HEK293T (cell line): ENCODE measurements at regions of chr20 and their contacts with region 1.

Region 1: GRCh38 chr20:50987592-50988210 is 29.1 kb downstream of the MOCS3 start:
- DNase-seq: peak; percentile 79

Region 2: DNA sequence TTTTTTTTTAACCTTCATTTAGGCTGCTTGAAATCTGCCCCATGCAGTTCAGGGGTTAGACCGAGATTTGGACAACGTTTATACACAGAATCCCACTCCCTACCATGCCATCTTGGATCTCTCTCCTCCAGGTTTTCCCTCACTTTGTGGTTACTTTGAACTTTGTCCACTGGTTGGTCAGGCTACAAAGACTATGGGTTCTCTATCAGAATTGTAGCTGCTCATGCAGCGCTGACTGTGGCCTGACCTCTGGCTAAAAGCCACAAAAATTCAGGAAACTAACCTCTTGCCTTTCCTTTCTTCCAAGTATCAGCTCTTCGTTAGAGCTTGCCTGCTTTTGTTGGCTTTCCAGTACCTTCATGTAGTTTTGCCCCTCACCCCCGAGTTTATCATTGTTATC is 80.1 kb after region 1 on chr20:
- CTCF ChIA-PET with region 1: no interaction called
- POLR2A ChIA-PET with region 1: no interaction called
- DNase-seq: no peak

Region 3: DNA sequence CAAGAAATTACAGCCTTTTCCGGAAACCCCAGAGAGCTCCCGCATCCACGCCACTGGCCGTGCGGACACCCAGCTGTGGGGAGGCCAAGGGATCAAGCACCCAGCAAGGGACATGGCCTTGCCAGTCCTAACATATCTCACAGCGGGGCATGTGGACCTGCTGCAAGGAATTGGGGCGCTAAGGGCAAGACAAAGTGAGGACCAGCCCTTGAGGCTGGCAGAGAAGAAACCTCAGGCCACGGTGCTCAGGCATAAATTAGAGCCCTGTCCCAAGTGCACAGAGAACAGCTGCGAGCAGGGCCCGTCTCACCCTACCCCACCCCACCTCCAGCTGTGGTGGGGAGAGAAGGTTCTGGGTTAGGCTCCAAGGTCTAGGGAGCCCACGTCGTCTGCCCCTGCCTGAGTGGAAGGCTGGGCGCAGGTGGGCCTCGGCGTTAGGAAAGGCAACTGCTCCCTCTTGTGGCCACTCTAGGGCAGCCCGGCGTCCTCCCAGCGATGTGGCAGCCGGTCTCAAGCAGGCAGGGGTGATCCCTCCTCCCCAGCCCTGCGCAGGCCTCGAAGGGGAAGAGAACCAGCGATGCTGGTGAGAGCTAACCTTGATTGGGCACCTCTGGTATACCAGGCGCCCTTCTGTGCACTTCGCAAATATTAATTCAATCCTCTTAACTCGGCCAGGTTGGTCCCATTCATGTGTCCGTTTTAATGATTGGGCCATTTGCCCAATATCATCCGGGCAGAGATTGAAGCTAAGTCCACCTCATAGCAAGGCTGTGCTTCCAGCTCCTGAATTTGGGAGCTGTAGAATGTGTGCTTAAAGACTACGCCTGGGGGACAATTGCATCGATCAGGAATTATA is 319.0 kb after region 1 on chr20:
- CTCF ChIA-PET with region 1: interaction called, 32 read pairs
- POLR2A ChIA-PET with region 1: no interaction called
- DNase-seq: peak; percentile 88

Region 4: DNA sequence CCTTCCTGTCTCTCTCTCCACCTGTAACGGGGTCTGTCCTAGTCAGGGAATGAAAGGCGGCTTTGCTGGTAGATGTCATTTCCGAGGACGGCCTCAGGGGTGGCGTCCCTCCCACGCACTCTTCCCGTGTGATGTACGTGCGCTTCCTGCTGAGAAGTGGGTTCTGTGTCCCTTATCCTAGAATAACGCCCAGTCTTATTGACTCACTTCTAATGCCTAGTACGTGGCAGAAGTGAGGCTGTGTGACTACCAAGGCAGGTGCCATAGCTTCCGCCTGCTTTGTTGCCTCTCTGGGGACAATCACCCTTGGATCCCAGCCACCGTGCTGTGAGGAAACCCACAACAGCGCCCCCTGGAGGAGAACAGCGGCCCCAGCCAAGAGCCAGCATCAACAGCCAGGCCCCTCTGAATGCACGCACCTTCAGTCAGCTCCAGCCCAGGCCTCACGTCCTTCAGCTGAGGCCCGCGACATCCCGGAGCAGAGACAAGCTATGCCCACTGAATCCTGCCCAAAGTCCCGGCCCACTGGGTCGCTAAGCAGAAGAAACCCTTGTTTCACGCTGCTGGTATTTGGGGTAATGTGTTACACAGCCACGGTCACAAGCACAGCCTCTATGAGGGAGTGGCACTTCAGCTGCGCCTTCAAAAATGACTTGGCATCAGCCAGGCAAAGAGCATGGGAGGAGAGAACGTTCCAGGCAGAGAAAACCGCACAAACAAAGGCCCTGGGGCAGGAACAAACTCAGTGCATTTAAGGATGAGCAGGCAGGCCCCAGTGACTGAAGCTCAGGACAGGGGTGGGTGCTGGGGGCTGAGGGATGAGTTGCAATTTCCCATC is 330.6 kb after region 1 on chr20:
- CTCF ChIA-PET with region 1: interaction called, 14 read pairs
- POLR2A ChIA-PET with region 1: no interaction called
- DNase-seq: peak; percentile 69

Region 5: GRCh38 chr20:51326201-51326819 is 338.6 kb after region 1 on chr20:
- CTCF ChIA-PET with region 1: interaction called, 25 read pairs
- POLR2A ChIA-PET with region 1: no interaction called
- DNase-seq: peak; percentile 25

Region 6: GRCh38 chr20:51596668-51597383 is 609.1 kb after region 1 on chr20:
- CTCF ChIA-PET with region 1: interaction called, 11 read pairs
- POLR2A ChIA-PET with region 1: no interaction called
- DNase-seq: no peak